Ascending aorta (tissue), 2 donors: ENCODE measurements at regions of chr9 and their contacts with region 1.

Region 1: DNA sequence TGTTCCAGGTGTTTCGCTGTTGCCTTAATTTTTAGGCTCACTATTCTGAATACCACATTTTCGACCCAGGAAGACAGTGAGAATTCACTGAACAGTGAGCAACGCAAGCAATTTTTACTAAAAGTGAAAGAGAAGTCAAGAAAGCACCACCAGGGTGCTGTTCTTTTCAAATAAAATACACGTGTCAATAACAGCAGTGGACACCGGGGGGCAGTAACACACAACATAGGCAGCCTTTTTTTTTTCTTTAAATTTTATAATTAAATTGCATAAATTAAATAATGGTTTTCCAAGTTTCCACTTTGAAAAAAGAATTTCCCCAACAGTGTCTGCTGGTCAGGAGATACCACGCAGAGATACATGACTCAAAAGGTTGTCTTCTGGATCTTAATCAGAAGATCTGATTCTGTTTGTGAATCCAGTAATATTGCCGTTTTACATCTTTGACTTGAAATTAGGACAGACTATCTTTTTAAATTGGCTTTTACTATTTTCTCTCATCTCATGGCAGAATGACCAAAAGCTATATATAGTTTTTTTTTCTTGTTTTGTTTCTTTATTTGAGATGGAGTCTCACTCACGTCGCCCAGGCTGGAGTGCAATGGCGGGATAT is 47.1 kb upstream of the SH3GL2 start:
- DNase-seq: no peak
- H3K4me3 ChIP-seq: no peak overlapping the region
- H3K27ac ChIP-seq: no peak overlapping the region
- H3K4me1 ChIP-seq: no peaks in the 10 kb centered on the region
- H3K27me3 ChIP-seq: no peaks in the 10 kb centered on the region
- CTCF ChIP-seq: peak in 2 of 3 experiments; percentile 28 to 52

Region 2: DNA sequence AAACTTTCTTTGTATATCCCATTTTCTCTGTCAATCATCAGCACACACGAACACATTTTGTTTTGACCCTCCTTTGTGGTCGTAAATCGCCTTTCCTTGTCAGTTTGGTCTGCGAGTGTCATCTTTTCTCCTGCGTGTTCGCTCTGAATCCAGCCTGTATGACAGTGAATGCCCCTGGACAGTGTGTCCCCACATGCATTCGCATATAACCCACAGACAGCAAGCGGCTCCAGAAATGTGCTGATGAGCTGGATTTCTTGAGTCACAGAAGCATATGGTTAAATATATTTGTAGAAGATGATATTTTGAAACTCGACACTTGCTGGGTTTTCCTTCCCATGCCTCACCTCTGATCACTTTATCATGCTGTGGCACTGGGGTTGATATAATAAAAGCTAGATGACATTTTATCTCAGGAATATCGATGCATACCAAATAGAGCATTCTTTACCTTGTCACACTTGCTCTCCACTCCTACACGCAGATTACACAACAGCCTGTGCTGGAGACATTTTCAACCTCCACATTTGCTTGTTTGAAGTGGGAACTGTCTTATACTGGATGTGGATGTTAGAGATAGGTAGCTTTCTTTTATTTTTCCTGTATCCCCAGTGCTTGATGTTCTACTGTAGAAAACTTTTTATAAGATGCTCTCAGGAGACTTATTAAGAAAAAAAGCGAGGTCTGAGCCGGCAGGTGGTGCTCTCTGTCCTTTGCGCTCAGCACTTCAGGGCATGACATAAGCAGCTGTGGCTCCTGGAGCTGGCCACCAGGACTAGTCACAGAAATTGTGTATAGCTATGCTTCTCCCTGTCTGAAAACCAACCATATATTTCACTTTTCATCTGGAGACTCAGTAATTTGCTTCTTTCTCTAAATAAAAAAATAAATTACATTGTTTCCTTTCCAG is 262.2 kb after region 1 on chr9:
- intact Hi-C with region 1: loop called (anchors 10 kb)
- DNase-seq: no peak
- H3K4me3 ChIP-seq: no peak overlapping the region
- H3K27ac ChIP-seq: no peak overlapping the region
- H3K4me1 ChIP-seq: no peaks in the 10 kb centered on the region
- H3K27me3 ChIP-seq: no peaks in the 10 kb centered on the region
- CTCF ChIP-seq: no peak